IMR-90 (cell line): ENCODE measurements at regions of chr16 and their contacts with region 1.

Region 1: GRCh38 chr16:65176603-65177002 is 54.7 kb upstream of the CDH11 start:
- DNase-seq: peak; percentile 93
- ATAC-seq: peak; percentile 97
- H3K4me3 ChIP-seq: no peak overlapping the region
- H3K27ac ChIP-seq: no peak overlapping the region
- H3K4me1 ChIP-seq: peaks cover 10% of the 10 kb centered on the region
- H3K27me3 ChIP-seq: no peaks in the 10 kb centered on the region; the same call in 1 of the 2 replicates
- CTCF ChIP-seq: no peak
- POLR2A ChIP-seq: no peak
- RAD21 ChIP-seq: no peak

Region 2: GRCh38 chr16:64481497-64481896 is 695.1 kb before region 1 on chr16:
- CTCF ChIA-PET with region 1: no interaction called
- POLR2A ChIA-PET with region 1: interaction called, 16 read pairs
- dilution Hi-C with region 1: no loop called
- in situ Hi-C with region 1: no loop called
- intact Hi-C with region 1: no loop called
- DNase-seq: no peak
- ATAC-seq: no peak
- H3K4me3 ChIP-seq: no peak overlapping the region
- H3K27ac ChIP-seq: no peak overlapping the region
- H3K4me1 ChIP-seq: peaks cover 2% of the 10 kb centered on the region; the same call in 1 of the 2 replicates
- H3K27me3 ChIP-seq: no peaks in the 10 kb centered on the region
- CTCF ChIP-seq: no peak
- POLR2A ChIP-seq: no peak
- RAD21 ChIP-seq: no peak